ENCODE measurements at regions of chr1 and their contacts with region 1.

Region 1: DNA sequence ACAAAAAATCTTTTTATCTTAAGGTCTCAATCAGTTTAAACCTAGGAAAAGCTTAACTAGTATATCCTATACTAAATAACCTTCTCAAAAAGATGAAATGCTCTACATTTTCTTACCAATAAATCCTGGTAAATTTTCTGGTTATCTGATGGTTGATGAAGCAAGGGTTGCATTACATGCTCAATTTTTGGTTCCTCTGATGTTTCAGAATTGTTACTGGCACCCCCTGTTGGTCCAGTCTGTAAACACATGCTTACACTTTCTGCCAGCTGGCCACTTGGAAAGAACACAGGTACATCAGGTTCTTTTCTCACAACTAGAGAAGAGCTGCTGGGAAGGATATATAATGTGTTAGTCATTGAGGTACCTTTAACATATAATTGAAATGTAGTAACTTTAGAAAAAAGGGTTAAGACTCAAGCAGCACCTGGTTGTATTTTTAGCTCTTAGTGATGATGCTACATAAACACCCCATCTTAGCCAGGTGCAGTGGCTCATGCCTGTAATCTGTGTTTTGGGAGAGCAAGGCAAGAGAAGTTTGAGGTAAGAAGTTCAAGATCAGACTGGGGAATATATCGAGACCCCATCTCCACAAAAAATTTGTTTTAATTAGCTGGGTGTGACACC is 30.9 kb upstream of the TAL1 start:
- DNase-seq: peak; percentile 39
- H3K4me3 Mint-ChIP-seq: no peak overlapping the region
- H3K27ac Mint-ChIP-seq: no peak overlapping the region
- H3K4me1 Mint-ChIP-seq: no peaks in the 10 kb centered on the region
- H3K27me3 Mint-ChIP-seq: no peaks in the 10 kb centered on the region

Region 2: GRCh38 chr1:47179017-47179987 is 83.6 kb before region 1 on chr1:
- intact Hi-C with region 1: loop called (anchors 5 kb)
- DNase-seq: peak; percentile 78
- H3K4me3 Mint-ChIP-seq: peak overlapping the region; percentile 88
- H3K27ac Mint-ChIP-seq: peak overlapping the region; percentile 86
- H3K4me1 Mint-ChIP-seq: peaks cover 11% of the 10 kb centered on the region
- H3K27me3 Mint-ChIP-seq: peaks cover 12% of the 10 kb centered on the region

Region 3: DNA sequence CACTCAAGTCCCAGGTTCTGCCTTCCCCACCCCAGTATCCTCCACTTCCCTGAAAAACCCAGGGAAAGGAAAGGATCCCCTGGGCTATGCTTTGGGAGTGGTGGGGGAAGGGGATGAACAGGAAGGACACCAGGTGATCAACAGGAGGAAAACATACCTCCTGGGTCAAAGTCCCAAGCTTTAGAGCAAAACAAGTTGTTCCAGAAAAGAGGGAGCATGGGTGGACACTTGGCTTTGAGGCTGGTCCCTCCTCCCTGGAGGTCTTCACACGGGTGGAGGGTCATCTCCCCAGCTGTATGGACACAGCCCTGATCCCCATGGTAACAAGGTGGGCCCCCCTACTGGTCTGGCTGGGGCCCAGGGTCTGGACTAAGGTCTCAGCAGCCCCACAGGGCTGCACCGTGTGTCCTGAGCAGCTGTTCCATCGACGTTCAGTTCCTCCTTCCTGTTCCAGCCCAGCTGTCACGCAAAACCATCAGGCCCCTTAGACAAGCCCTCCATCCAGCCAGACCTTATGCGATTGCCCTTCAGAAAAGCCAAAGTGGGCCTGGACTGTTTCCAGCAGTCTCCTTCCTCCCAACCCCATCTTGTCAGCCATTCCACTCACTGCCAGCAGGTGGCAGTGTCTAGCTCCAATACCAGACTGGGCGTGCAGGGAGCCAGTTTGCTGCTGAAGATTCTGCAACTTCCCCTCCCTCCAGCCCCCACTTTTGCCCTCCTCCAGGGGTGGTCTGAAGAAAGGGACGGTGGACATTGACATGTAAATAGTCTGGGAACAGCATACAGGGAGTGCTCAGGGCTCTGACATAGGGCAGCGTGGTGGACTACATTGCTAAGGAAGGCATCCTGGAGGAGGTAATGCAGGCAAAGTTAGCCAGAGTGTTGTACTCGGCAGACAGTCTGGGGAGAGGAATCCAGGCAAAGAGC is 70.2 kb before region 1 on chr1:
- intact Hi-C with region 1: loop called (anchors 1 kb)
- DNase-seq: peak; percentile 61
- H3K4me3 Mint-ChIP-seq: no peak overlapping the region
- H3K27ac Mint-ChIP-seq: no peak overlapping the region
- H3K4me1 Mint-ChIP-seq: no peaks in the 10 kb centered on the region
- H3K27me3 Mint-ChIP-seq: peaks cover 5% of the 10 kb centered on the region

Measured in activated T-helper 2 cell treated with anti-CD3 and anti-CD28 coated beads, Interferon-gamma antibody, Interleukin-2, Interleukin-4, amounts not matched to agents 10 μg/mL and 5 μg/mL and 100 μg/mL, durations not matched to agents 14 hours and 24 hours and 36 hours (primary cell).